ENCODE measurements at regions of chr7 and their contacts with region 1.

Region 1: DNA sequence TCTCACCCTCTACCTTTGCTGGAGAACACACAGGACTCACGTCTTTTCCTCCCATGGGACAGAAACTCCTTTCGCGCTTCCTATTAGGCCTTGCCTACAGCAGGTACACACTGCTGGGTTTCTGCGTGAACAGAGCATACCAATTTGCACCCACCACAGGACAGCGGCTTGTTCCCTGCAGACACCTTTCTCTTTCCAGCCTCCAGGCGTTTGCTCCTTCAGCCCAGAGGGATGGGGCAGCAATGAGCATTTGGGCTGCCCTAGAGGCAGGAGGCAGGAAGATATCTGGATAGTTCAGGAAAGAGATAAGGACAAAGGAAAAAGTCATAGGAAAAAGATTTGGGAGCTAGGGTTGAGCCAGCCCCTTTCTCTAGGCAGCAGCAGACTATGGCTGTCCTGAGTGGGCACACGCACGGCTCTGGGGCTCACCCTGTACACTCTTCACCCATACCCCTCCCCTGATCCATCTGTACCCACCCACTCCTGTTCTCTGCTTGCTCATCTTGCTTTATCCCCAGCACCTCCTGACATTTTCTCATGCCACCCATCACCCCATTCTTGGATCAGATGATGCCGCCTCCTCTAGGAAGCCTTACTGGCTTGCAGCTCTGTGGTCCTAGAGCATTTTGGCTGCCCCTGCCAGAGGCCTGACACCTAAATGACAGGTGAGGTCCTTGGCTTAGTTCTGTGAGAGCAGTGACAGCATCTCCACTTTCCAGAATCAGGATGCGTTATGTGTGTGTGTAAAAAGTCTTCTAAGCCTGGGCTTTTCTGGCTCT is 40.7 kb upstream of the SPDYE3 start:
- DNase-seq: no peak
- ATAC-seq: no peak
- H3K4me3 ChIP-seq: peak overlapping the region; percentile 36
- H3K27ac ChIP-seq: peak overlapping the region; percentile 91
- H3K4me1 ChIP-seq: peaks cover 34% of the 10 kb centered on the region
- H3K27me3 ChIP-seq: no peaks in the 10 kb centered on the region
- CTCF ChIP-seq: no peak

Region 2: DNA sequence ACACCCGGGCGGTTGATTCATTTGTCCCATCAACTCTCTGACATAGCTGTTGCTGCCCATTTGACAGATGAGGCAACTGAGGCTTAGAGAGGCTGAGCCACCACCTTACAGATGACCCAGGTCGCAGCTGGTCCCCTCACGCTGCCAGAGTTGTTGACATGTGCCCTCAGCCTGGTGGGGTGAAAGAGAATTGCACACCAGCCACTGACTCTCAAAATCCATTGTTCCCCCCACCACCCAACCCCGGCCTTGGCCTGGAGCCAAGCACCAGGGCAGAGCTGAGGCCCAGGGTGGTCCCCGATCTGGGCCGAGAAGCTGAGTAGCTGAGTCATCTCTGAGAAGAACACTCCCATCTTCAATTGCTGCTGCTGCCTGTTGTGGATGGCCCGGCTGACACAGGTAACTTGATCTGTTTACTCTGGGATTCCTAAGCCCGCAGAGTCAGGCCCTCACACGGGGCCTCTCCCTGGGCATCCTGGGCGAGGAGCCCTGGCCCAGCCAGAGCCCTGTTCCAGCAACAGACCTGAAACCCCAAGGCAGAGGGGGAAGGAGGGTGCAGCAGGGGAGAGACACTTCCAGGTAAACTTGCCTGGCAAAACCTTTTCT is 19.5 kb before region 1 on chr7:
- intact Hi-C with region 1: loop called in 1 of 2 experiments (anchors 1 kb)
- DNase-seq: peak; percentile 60 to 88
- ATAC-seq: peak; percentile 70 to 75 (median 72)
- H3K4me3 ChIP-seq: peak overlapping the region; percentile 2
- H3K27ac ChIP-seq: peak overlapping the region; percentile 96
- H3K4me1 ChIP-seq: peaks cover 50% of the 10 kb centered on the region
- H3K27me3 ChIP-seq: no peaks in the 10 kb centered on the region
- CTCF ChIP-seq: peak; percentile 20

Measured in psoas muscle (tissue), 8 donors.